K562 (cell line): ENCODE measurements at regions of chr7 and their contacts with region 1.

Region 1: DNA sequence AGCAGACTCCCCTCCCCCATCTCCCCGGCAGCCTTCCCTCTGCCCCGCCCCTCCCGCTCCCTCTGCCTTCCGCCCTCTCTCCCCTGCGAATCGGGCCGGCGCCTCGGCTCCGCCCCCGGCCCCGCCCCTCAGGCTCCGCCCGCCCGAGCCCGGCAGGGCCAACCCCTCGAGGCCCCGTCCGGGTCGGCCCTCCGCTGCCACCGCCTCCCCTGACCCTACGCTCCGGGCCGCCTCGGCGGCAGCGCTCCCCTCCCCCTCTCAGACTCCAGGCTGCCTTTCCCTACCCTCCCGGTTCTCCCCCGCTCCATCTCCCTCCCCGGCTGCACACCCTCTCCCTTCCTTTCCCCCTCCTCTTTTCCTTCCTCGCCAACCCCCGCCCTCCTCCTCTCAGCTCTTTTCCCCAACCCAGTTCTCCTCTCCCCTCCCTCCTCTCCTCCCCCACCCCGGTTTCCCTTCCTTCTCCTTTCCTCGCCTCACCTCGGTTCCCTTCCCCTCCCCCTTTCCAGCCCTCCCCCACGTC is 1.6 kb downstream of the ZNF467 start:
- DNase-seq: peak; percentile 97 to 98 (median 98)
- ATAC-seq: peak; percentile 95
- H3K4me3 ChIP-seq: peak overlapping the region; percentile 59
- H3K27ac ChIP-seq: peak overlapping the region; percentile 79
- H3K4me1 ChIP-seq: peaks cover 16 to 70% of the 10 kb centered on the region in 2 experiments
- H3K27me3 ChIP-seq: no peaks in the 10 kb centered on the region
- CTCF ChIP-seq: no peak
- EP300 ChIP-seq: peak; percentile 67
- POLR2A ChIP-seq: peak; percentile 75
- RAD21 ChIP-seq: no peak

Region 2: DNA sequence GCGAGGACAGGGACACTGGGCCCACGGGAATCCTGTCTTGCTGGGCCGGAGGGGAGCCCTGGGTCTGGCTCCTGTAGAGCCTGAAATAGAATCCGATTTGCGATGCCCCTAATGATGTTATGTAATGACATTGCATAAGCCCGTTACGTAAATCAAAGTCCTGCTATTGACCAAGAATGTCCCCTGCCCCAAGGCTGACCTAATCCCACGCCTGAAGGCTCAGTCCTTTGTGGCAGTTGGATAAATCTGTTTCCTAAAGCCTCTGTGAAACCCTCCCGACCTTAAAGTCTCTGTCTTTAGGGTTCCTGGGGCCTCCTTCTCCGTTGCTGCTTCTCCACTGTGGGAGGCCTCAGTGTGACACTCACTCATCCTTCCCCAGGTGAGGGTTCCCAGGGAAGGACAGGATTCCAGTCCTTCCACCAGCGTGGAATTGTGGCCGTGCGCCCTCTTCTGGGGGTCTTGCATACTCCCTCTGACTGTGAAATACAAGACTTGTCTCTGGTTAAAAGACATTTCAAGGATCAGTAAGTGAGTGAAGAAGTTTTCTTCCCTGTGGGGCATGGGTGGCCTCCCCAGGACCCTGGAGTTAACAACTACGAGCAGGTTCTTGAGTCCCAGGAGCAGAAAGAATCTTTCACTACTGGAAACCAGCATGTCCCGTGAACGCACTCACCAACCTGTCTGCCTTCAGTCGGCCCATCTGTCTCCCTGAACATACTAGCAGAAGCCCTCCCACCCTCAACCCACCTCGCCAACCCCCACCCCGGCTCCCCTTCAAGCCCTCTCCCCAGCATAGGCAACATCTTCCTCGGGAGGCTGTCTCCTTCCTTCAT is 18.2 kb before region 1 on chr7:
- CTCF ChIA-PET with region 1: no interaction called
- POLR2A ChIA-PET with region 1: interaction called, 5 read pairs
- in situ Hi-C with region 1: no loop called
- intact Hi-C with region 1: loop called (anchors 2 kb)
- DNase-seq: peak; percentile 70 to 80 (median 75)
- ATAC-seq: peak; percentile 89
- H3K4me3 ChIP-seq: no peak overlapping the region
- H3K27ac ChIP-seq: no peak overlapping the region
- H3K4me1 ChIP-seq: peaks cover 3 to 12% of the 10 kb centered on the region in 2 experiments; a peak in 4 of 5 replicates
- H3K27me3 ChIP-seq: peaks cover 3% of the 10 kb centered on the region in 2 experiments; a peak in 1 of 5 replicates
- CTCF ChIP-seq: peak; percentile 88 to 96 (median 89)
- EP300 ChIP-seq: no peak
- POLR2A ChIP-seq: no peak
- RAD21 ChIP-seq: peak; percentile 55 to 83

Region 3: GRCh38 chr7:149761307-149761706 is 10.5 kb before region 1 on chr7:
- CTCF ChIA-PET with region 1: no interaction called
- POLR2A ChIA-PET with region 1: interaction called, 14 read pairs
- in situ Hi-C with region 1: no loop called
- intact Hi-C with region 1: no loop called
- DNase-seq: peak; percentile 46 to 71 (median 56)
- ATAC-seq: peak; percentile 71
- H3K4me3 ChIP-seq: no peak overlapping the region
- H3K27ac ChIP-seq: no peak overlapping the region
- H3K4me1 ChIP-seq: peaks cover 30 to 39% of the 10 kb centered on the region in 2 experiments
- H3K27me3 ChIP-seq: no peaks in the 10 kb centered on the region
- CTCF ChIP-seq: no peak
- EP300 ChIP-seq: peak; percentile 22; the same call in 1 of the 2 replicates
- POLR2A ChIP-seq: no peak
- RAD21 ChIP-seq: no peak

Region 4: GRCh38 chr7:149790146-149790548 is 18.4 kb after region 1 on chr7:
- CTCF ChIA-PET with region 1: no interaction called
- POLR2A ChIA-PET with region 1: interaction called, 5 read pairs
- in situ Hi-C with region 1: no loop called
- intact Hi-C with region 1: loop called (anchors 2 kb)
- DNase-seq: peak; percentile 85 to 93 (median 90)
- ATAC-seq: peak; percentile 87
- H3K4me3 ChIP-seq: no peak overlapping the region
- H3K27ac ChIP-seq: no peak overlapping the region
- H3K4me1 ChIP-seq: peaks cover 4 to 76% of the 10 kb centered on the region in 2 experiments; a peak in 4 of 5 replicates
- H3K27me3 ChIP-seq: peaks cover 7 to 65% of the 10 kb centered on the region in 2 experiments; a peak in 4 of 5 replicates
- CTCF ChIP-seq: peak; percentile 71 to 98 (median 95)
- EP300 ChIP-seq: no peak
- POLR2A ChIP-seq: no peak
- RAD21 ChIP-seq: peak; percentile 55 to 75